ENCODE measurements at regions of chr3 and their contacts with region 1.

Region 1: DNA sequence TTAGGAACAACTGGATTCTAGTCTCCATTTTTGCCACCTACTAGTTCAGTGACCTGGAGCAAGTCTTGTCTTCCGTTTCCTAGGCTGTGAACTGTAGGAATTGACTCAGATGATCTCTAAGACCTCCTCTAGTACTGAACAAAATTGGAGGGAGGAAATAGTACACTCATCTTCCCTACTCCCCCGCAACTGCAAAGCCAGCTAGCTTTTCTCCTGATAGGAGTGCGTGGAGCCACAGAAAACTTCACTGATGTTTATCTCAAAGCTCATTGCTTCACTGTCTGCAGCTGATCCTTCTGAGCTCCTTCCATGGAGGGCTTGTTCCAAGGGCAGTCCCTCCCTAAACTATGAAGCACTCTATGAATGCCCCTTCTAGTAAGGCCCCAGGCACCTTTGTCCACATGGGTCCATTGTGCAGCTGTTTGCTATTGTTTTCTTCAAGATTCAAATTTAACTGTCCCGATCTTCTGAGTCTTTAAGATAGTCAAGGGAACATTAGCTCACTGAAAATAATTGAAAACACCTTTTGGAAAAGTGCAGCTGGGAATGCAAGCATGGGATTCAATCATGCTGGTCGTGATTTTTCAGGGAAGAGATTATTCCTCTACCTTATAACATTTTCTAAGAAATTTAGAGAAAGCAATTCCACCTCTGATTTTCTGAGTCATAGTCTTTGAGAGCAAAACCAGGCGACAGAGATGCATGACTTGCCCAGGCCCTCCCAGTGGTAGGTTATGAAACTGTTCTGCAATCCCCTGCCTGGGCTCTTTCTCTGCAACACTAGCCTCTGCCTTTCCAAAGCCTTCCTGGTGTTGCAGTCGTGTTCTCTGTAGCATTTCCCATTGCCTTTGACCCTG is 24.3 kb downstream of the FILIP1L start:
- DNase-seq: peak; percentile 43
- ATAC-seq: peak; percentile 95
- H3K4me3 Mint-ChIP-seq: no peak overlapping the region
- H3K27ac Mint-ChIP-seq: peak overlapping the region; percentile 36
- H3K4me1 Mint-ChIP-seq: peaks cover 45% of the 10 kb centered on the region
- H3K27me3 Mint-ChIP-seq: no peaks in the 10 kb centered on the region
- CTCF ChIP-seq: no peak; the same call in 1 of the 2 replicates

Region 2: GRCh38 chr3:100073899-100074307 is 16.1 kb before region 1 on chr3:
- CTCF ChIA-PET with region 1: interaction called, 14 read pairs
- POLR2A ChIA-PET with region 1: no interaction called
- DNase-seq: peak; percentile 28
- ATAC-seq: peak; percentile 80
- H3K4me3 Mint-ChIP-seq: peak overlapping the region; percentile 53
- H3K27ac Mint-ChIP-seq: peak overlapping the region; percentile 97
- H3K4me1 Mint-ChIP-seq: peaks cover 50% of the 10 kb centered on the region
- H3K27me3 Mint-ChIP-seq: no peaks in the 10 kb centered on the region
- CTCF ChIP-seq: no peak

Measured in WTC11 (cell line).